BJ (cell line): ENCODE measurements at regions of chr9 and their contacts with region 1.

Region 1: GRCh38 chr9:129626079-129626624 is at the start of gene NTMT1:
- DNase-seq: no peak
- H3K4me3 ChIP-seq: peak within 1 kb of the TSS; percentile 88
- H3K27me3 ChIP-seq: no peaks in the 10 kb centered on the region
- CTCF ChIP-seq: no peak
- polyA plus RNA-seq, gene NTMT1: 77.1 and 96.3 TPM in 2 replicates

Region 2: GRCh38 chr9:129610473-129611301 is 15.5 kb before region 1 on chr9:
- CTCF ChIA-PET with region 1: interaction called, 37 read pairs
- POLR2A ChIA-PET with region 1: no interaction called
- DNase-seq: no peak
- H3K4me3 ChIP-seq: peak overlapping the region; percentile 51
- H3K27me3 ChIP-seq: no peaks in the 10 kb centered on the region
- CTCF ChIP-seq: peak; percentile 90

Region 3: DNA sequence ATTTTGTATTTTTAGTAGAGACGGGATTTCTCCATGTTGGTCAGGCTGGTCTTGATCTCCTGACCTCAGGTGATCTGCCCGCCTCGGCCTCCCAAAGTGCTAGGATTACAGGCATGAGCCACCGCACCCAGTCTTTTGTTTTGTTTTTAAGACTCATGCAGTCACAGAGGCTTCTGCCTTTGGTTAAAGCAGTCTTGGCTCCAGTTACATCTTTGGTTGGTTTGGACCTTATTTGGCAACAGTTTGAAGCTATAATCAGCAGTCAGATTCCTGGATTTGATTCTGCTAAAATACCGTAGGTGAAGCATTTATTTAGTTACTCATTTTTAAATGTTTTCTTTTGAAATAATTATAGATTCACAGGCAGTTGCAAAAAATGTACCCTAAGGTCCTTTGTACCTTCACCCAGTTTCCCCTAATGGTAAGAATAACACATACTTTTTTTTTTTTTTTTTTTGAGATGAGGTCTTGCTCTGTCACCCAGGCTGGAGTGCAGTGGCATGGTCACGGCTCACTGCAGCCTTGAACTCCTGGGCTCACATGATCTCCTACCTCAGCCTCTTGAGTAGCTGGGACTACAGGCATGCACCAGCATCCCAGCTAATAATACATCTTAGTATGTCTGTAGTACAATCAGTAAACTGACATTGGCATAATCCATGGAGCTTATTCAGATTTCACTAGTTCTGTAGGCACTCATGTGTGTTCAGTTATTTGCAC is 224.8 kb after region 1 on chr9:
- CTCF ChIA-PET with region 1: no interaction called
- POLR2A ChIA-PET with region 1: no interaction called
- DNase-seq: no peak
- H3K4me3 ChIP-seq: no peak overlapping the region
- H3K27me3 ChIP-seq: no peaks in the 10 kb centered on the region
- CTCF ChIP-seq: no peak